Heart left ventricle (tissue), 16 donors: ENCODE measurements at regions of chr13 and their contacts with region 1.

Region 1: DNA sequence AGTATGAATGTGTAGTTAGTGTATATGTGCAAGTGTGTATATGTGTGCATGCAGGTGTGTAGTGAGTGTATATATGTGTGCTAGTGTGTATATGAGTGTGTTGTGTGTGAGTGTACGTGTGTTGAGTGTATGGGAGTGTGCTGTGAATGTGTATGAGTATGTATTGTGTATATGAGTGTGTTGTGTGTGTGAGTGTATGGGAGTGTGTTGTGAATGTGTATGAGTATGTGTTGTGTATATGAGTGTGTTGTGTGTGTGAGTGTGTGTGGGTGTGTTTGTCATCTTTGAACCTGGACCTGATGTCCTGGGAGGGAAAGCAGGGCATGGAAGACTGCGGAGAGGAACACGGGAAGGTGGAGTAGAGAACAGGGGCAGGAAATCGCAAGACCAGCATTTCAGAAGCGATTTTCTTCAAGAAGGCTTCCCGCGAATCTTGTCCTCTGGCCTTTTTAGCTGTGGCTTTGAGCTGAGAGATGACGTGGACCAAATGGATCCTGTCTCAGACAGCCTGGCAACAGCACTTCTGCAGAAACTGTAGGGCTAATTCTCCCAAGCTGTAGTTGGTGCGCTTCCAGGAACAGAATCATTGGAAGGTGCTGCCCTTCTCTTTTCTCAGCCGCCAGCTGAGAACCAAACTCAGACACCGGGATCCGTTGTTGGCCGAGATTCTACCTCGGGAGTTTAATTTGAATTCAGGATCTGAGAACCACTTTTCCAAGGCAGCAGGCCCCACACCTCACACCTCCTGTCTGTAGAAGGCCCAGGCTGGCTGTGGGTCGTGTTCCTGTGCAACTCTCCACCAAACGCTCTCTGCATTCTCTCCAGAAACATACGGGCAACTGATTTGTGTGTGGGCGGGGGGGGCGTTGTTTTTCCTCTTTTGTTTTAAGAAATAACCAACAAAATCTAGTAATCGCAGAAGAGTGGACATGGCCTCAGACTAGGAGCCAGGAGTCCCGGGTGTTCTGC is 94.7 kb upstream of the RAP2A start:
- DNase-seq: peak in 4 of 5 donors; percentile 46 to 79 (median 74)
- ATAC-seq: peak; percentile 68 to 91 (median 87)
- H3K4me3 ChIP-seq: no peak overlapping the region
- H3K27ac ChIP-seq: peak overlapping the region in 11 of 12 donors; percentile 35 to 80 (median 69)
- H3K4me1 ChIP-seq: peaks cover 7 to 73% (median 39%) of the 10 kb centered on the region in 12 donors
- H3K27me3 ChIP-seq: no peaks in the 10 kb centered on the region
- CTCF ChIP-seq: peak in 1 of 12 donors; percentile 6
- POLR2A ChIP-seq: no peak

Region 2: DNA sequence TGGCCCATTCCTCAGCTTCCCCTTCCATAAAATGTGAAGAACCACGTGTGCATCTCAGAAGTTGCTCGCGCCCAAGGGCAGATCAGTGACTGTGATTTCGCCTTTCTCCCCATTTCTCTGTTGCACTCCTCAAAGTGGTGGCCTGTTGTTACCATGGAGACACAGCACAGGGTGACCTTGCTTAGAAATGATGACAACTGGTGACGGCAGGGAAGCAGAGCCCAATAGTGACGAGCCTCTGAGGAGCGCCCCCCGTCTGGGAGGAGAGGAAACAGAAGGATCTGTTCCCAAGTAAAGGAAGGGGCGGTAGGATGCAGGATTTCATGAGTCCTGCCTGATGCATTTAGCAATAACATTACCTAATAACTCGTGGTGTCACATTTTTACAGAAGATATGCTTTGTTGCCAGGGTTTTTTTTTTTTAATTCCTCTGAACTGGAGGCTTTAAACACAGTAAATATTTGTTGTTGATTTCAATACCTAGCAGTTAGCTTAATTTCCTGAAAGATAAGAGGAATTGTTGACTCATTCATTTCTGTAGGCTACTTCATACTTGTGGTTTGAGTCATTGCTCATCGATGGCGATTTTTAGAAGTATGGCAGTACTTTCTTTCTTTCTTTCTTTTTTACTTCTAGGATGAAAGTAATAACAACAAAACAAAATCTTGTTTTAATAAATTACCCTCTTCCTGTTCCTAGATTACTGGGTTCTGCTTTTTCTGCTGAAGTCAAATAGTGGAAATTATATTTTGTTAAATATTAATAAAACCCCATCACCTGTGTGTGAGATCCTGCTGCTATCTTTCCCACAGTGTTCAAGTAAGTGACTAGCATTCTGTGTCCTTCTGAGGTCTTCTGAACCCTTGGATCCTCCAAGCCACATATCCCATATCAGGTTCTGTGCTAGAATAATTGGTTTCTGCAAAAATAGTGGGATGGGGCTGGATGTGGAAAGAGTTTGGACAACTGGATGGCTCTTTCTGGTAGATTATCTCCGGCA is 81.2 kb before region 1 on chr13:
- intact Hi-C with region 1: loop called in 1 of 10 experiments (anchors 10 kb)
- DNase-seq: peak in 4 of 5 donors; percentile 56 to 80 (median 61)
- ATAC-seq: peak; percentile 44 to 73 (median 61)
- H3K4me3 ChIP-seq: no peak overlapping the region
- H3K27ac ChIP-seq: peak overlapping the region in 10 of 12 donors; percentile 39 to 89 (median 72)
- H3K4me1 ChIP-seq: peaks cover 19 to 98% (median 83%) of the 10 kb centered on the region in 12 donors
- H3K27me3 ChIP-seq: no peaks in the 10 kb centered on the region
- CTCF ChIP-seq: peak in 5 of 12 donors; percentile 13 to 32 (median 19)
- POLR2A ChIP-seq: no peak

Region 3: GRCh38 chr13:97275265-97275664 is 64.0 kb before region 1 on chr13:
- intact Hi-C with region 1: loop called in 2 of 10 experiments (anchors 10 kb)
- DNase-seq: peak in 1 of 5 donors; percentile 33
- ATAC-seq: peak in 3 of 4 donors; percentile 40 to 75 (median 55)
- H3K4me3 ChIP-seq: no peak overlapping the region
- H3K27ac ChIP-seq: peak overlapping the region in 10 of 12 donors; percentile 14 to 75 (median 52)
- H3K4me1 ChIP-seq: peaks cover 6 to 86% (median 76%) of the 10 kb centered on the region in 12 donors
- H3K27me3 ChIP-seq: no peaks in the 10 kb centered on the region
- CTCF ChIP-seq: no peak
- POLR2A ChIP-seq: no peak